ENCODE measurements at regions of chr14 and their contacts with region 1.

Region 1: DNA sequence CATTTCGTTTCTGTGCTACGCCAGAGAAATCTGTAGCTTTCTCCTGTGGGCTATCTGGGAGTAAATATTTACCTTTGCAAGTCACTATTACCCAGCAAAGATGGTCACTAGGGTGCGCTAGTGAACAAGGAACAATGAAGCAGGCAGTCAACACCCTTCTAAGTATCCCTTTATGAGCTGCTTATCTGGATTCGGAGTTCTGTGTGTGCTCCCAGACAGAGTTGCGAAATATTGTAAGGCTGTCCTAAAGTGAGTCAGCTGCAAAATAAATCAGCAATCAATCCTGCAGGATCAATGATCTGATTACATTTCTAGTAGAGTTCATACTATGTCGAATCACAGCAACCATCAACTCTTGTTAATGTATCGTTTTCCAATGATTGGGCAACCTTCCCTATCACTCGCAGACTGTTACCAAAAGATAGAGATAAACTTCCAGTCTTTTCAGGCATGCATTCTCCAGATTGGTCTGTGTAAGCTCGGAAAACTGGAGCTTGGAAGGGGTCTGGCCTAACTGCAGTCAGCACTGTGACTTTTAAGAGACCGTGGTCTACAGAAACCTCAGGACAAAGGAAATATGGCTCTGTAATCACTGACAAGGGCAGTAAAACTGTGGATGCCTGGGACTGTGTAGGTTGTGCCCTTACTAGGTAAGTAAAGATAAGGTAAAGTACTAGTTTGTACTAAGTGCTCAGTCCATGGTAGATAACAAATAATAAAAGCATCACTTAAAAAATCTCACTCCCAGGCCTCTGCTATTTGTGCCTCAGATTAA is 133.5 kb downstream of the KCNK10 start:
- DNase-seq: peak; percentile 77
- ATAC-seq: peak; percentile 78
- H3K4me3 Mint-ChIP-seq: peak overlapping the region; percentile 45
- H3K27ac Mint-ChIP-seq: no peak overlapping the region
- H3K4me1 Mint-ChIP-seq: peaks cover 4% of the 10 kb centered on the region
- H3K27me3 Mint-ChIP-seq: peaks cover 20% of the 10 kb centered on the region

Region 2: DNA sequence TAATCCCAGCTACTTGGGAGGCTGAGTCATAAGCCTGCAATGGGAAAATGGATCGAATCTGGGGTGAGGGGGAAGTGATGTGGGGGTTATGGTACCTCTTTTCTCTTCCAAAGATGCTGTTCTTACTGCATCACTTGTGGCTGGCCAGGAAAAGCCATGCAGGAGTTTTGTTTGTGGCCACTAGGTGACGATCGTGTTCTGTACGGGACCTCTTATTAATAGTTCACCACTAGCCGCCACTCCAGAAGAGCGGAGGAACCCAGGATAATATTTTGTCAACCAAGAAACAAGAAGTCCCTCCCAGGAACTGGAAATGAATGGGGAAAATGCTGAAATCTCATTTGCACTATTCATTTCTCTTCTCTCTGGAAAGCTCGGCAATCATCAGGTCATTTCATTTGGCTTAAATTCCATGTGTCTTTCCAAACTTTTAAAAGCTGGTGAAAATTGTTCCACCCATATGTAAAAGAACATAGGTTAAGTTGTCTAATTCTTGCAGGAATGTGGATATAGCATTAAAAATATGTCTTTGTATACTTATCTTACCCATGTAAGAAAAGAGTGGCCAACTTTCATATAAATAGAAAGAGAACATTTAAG is 175.8 kb before region 1 on chr14:
- CTCF ChIA-PET with region 1: interaction called, 10 read pairs
- DNase-seq: no peak
- ATAC-seq: peak; percentile 45
- H3K4me3 Mint-ChIP-seq: no peak overlapping the region
- H3K27ac Mint-ChIP-seq: no peak overlapping the region
- H3K4me1 Mint-ChIP-seq: peaks cover 51% of the 10 kb centered on the region
- H3K27me3 Mint-ChIP-seq: no peaks in the 10 kb centered on the region

Region 3: DNA sequence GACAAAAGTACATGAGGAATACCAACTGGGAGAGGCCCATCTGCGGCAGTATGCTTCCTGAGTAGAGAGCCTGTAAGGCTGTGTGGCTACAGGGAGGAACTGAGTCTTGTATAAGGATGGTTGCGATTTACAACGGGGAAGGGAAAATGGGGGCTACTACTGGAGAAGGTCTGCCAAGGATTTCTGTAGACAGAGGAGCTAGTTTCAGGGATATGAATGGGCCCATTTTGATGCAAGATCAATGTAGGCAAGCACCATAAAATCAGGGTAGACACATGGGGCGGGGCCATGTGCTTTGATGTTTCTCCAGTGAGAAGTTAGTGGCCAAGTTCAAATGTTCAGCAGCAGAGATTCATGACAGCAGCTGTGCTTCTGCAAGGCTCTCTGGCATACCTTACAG is 35.3 kb before region 1 on chr14:
- CTCF ChIA-PET with region 1: no interaction called
- DNase-seq: no peak
- ATAC-seq: no peak
- H3K4me3 Mint-ChIP-seq: no peak overlapping the region
- H3K27ac Mint-ChIP-seq: no peak overlapping the region
- H3K4me1 Mint-ChIP-seq: no peaks in the 10 kb centered on the region
- H3K27me3 Mint-ChIP-seq: peaks cover 3% of the 10 kb centered on the region

Region 4: GRCh38 chr14:88168498-88169165 is 21.0 kb before region 1 on chr14:
- CTCF ChIA-PET with region 1: interaction called, 10 read pairs
- DNase-seq: peak; percentile 66
- ATAC-seq: peak; percentile 86
- H3K4me3 Mint-ChIP-seq: peak overlapping the region; percentile 37
- H3K27ac Mint-ChIP-seq: no peak overlapping the region
- H3K4me1 Mint-ChIP-seq: peaks cover 29% of the 10 kb centered on the region
- H3K27me3 Mint-ChIP-seq: peaks cover 26% of the 10 kb centered on the region

Measured in activated CD8-positive, alpha-beta memory T cell treated with anti-CD3 and anti-CD28 coated beads, Interleukin-2, amount 10 ng/mL, durations not matched to agents 7 days and 5 days (primary cell).